ENCODE measurements at regions of chr15 and their contacts with region 1.

Region 1: GRCh38 chr15:41989259-41989933 is 17.0 kb upstream of the EHD4 start:
- DNase-seq: peak; percentile 43 to 85
- H3K4me3 ChIP-seq: no peak overlapping the region
- H3K27ac ChIP-seq: no peak overlapping the region
- H3K4me1 ChIP-seq: no peaks in the 10 kb centered on the region
- H3K27me3 ChIP-seq: no peaks in the 10 kb centered on the region
- CTCF ChIP-seq: peak; percentile 88

Region 2: DNA sequence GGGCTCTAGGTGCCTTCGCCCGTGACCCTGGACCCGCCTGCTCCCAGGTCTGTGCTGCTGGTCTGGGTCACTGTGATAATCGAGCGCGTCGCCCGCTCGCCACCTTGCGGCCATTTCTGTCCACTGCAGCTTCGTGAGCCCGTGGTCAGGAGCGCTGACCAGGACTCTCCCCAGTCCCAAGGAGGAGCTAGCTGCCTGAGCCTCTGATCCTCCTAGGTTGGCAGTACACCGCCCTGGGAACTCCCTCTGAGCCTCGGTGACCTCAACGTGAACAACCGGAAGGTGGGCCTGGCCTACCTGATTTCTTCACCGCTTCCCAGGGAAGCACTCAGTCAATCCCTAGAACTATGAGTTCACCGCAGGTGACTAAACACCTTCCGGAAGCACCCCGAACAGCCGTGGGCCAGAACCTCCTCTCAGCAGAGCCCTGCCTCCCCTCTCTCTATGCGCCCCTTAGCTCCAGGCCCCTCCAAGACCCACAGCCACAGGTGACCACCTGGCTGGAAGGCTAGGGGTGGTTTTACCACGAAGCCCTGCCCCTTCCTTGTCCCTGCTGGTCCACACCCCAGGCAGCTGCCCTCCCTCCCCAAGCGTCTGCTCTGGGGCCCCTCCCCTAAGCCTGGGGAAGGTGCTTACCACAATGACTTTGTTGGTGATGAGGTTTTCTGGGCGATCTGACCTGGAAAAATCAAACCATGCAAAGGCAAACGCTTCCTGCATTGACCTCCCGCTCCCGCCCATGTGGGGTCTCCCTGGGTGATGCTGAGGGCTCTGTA is 95.3 kb after region 1 on chr15:
- CTCF ChIA-PET with region 1: interaction called, 4 read pairs
- POLR2A ChIA-PET with region 1: no interaction called
- intact Hi-C with region 1: loop called (anchors 1 kb)
- DNase-seq: peak; percentile 86 to 91
- H3K4me3 ChIP-seq: peak overlapping the region; percentile 50; the same call in 1 of the 2 replicates
- H3K27ac ChIP-seq: peak overlapping the region; percentile 93
- H3K4me1 ChIP-seq: peaks cover 29% of the 10 kb centered on the region
- H3K27me3 ChIP-seq: no peaks in the 10 kb centered on the region
- CTCF ChIP-seq: peak; percentile 90

Measured in PC-9 (cell line).